ENCODE measurements at regions of chr7 and their contacts with region 1.

Region 1: DNA sequence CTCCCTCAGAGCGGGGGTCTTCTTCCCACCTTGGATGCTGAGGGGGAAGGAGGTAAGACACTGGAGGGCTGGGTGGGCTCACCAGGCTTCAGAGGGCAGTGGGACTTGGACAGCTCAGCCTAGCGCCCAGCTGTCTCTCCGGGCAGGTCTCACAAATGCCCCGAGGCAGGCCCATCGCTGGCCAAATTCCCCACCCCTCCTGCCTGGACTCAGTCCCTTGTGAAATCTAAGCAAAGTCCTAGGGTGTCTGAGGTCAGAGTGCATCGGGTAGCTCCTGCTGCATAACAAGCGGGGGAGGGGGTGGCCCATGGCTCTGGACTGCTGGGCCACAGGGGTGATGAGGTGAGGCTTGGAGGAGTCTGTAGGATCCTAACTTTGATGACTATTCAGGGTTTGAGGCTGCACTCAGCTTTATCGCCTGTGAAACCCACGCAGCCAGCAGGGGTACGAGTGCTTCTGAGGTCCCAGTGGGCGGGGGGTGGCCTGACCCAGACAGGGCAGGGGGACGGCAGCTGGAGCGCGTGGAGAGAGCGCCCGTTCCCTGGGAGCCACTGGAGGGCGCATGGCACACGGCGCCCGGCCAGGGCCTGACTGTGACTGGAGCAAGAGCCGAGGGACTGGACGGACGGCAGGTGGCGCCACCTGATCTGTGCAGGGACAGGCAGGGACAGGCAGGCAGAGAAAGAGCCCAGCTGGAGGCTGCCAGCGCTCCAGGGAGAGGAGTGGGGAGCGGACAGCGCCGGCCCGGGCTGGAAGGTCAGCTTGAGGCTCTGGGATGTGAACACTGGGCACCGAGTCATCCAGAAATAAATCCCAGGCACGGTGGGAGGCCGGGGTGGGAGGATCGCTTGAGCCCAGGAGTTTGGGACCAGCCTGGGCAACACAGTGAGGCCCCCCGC is 10.0 kb downstream of the CYP2W1 start:
- DNase-seq: peak; percentile 97
- ATAC-seq: peak; percentile 94 to 96

Region 2: GRCh38 chr7:657565-658119 is 335.3 kb before region 1 on chr7:
- intact Hi-C with region 1: no loop called
- DNase-seq: peak; percentile 43
- ATAC-seq: peak; percentile 76 to 77

Region 3: DNA sequence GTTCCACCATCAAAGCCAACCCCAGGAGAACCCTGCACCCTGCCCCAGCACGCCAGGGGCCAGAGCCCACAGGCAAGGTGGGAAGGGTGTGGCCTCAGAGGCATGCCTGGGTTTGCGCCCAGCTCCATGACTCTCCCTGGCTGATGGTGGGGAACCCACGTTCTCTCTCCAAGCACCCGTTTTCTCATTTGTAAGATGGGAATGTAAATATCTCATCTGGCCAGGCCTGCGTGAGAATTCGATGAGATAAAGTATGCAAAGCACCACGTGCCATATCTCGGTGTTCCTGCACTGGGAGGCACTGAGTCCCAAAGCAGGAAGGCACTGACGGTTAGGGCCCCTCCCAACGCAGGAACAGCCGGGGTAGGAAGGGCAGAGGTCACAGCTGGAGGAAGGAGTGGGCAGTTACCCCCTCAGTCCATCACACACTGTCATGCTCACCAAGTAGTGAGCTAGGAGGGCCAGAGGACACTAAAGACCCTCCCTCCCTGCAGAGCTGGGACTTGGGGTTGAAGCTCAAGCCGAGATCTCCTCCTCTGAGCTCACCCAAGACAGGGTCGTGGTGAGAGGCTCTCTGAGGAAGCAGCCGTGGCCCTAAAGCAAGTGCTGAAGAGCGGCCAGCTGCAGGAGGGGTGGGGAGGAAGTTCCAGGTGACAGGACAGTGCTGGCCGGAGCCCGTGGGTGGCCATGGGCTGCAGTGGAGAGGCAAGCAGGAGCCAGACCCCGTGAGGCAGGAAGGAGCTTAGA is 293.7 kb before region 1 on chr7:
- intact Hi-C with region 1: no loop called
- DNase-seq: peak; percentile 60
- ATAC-seq: peak; percentile 47 to 69

Region 4: GRCh38 chr7:1065263-1066260 is 72.6 kb after region 1 on chr7:
- intact Hi-C with region 1: loop called (anchors 1 to 2 kb)
- DNase-seq: peak; percentile 91
- ATAC-seq: peak; percentile 93 to 97

Region 5: GRCh38 chr7:1137510-1138167 is 144.7 kb after region 1 on chr7:
- intact Hi-C with region 1: loop called (anchors 5 to 10 kb)
- DNase-seq: no peak
- ATAC-seq: peak; percentile 88 to 92

Region 6: GRCh38 chr7:1144269-1144771 is 151.4 kb after region 1 on chr7:
- intact Hi-C with region 1: loop called (anchors 5 to 10 kb)
- DNase-seq: peak; percentile 57
- ATAC-seq: peak; percentile 90 to 96

Measured in left cardiac atrium (tissue), 4 donors.